ENCODE measurements at regions of chr14 and their contacts with region 1.

Region 1: GRCh38 chr14:81170104-81170828 is 50.5 kb downstream of the GTF2A1 start:
- DNase-seq: peak; percentile 88 to 89
- H3K4me3 ChIP-seq: peak overlapping the region; percentile 64
- H3K4me3 Mint-ChIP-seq: peak overlapping the region; percentile 81
- H3K27ac Mint-ChIP-seq: peak overlapping the region; percentile 86
- H3K4me1 ChIP-seq: no peaks in the 10 kb centered on the region
- H3K4me1 Mint-ChIP-seq: no peaks in the 10 kb centered on the region
- H3K27me3 ChIP-seq: no peaks in the 10 kb centered on the region
- H3K27me3 Mint-ChIP-seq: no peaks in the 10 kb centered on the region
- CTCF ChIP-seq: peak; percentile 76 to 86

Region 2: DNA sequence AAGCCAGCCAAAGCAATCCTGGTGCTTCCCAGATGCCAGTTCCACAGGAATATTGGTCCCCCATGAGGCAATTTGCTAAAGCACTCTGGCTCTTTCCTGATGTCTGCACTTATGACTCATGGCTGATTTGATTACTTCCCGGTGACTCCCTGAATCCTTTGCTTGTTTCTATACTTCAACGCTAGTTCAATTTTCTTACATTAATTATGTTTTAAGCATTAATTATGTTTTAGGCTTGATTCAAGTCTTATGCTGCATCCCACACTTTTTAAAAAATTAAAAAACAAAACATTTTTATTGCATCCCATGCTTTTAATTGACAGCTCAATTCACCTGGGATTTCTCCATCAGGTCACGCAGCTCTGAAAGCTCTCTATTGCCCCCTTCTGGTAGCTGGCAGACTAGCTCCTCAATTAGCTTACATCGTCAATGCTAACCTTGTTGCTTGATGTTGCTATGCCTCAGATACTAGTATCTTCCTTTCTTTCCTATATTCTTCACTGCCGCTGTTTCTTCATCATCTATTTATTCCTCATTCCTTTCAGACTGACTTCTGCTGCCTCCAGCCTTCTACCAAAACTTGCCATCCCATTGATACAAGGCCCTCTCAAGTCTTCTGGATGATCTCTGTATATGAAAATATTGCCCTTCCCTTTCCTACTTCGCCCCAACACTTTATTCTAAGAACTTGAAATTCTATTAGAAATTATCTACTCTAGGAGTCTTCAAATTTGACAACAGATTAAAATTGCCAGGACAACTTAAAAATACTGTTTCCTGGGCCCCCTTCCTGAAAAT is 182.8 kb before region 1 on chr14:
- CTCF ChIA-PET with region 1: interaction called, 10 read pairs
- POLR2A ChIA-PET with region 1: no interaction called
- intact Hi-C with region 1: no loop called
- DNase-seq: peak; percentile 57 to 74
- H3K4me3 ChIP-seq: no peak overlapping the region
- H3K4me3 Mint-ChIP-seq: no peak overlapping the region
- H3K27ac Mint-ChIP-seq: no peak overlapping the region
- H3K4me1 ChIP-seq: no peaks in the 10 kb centered on the region
- H3K4me1 Mint-ChIP-seq: no peaks in the 10 kb centered on the region
- H3K27me3 ChIP-seq: no peaks in the 10 kb centered on the region
- H3K27me3 Mint-ChIP-seq: peaks cover 10% of the 10 kb centered on the region
- CTCF ChIP-seq: peak; percentile 81 to 92

Region 3: DNA sequence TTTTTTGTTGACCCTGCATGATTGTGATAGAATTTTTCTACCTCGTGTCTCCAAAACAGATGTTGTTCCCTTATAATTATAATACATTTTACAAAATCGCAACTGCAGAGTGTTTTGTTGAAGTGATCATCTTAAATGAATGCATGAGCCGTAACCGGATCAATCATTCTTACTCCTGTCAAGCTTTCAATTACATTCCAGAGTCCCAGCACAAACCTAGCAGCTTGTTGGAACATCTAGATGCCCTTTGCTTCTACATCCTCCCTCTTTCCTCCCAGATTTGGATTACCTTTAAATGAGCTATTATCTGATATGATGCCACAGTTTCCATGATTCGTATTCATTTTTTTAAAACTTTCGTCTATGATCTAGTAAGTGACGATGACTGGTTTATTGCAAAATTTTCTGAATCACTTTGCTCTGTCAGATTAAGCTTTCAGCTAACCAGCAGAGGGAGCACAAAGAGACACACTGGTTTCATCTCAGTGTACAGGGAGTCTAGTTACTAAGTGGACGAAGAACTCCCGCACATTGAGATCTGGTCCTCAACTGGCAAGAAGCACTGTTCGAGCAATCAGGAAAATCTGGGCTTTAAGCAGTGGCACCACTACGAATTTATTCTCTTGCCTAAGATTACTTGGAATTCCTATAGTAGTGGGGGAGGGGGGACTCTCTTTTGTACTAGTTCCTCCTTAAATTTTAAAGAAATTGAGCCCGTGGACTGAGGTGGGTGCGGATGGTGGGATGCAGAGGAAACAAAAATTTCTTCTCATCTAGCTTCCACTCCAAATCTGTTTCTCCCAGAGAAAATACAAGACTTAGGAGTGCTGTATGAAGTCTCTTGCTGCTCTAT is 174.0 kb before region 1 on chr14:
- CTCF ChIA-PET with region 1: interaction called, 14 read pairs
- POLR2A ChIA-PET with region 1: interaction called, 3 read pairs
- intact Hi-C with region 1: loop called (anchors 1 kb)
- DNase-seq: peak; percentile 45 to 56
- H3K4me3 ChIP-seq: no peak overlapping the region
- H3K4me3 Mint-ChIP-seq: no peak overlapping the region
- H3K27ac Mint-ChIP-seq: no peak overlapping the region
- H3K4me1 ChIP-seq: no peaks in the 10 kb centered on the region
- H3K4me1 Mint-ChIP-seq: no peaks in the 10 kb centered on the region
- H3K27me3 ChIP-seq: no peaks in the 10 kb centered on the region
- H3K27me3 Mint-ChIP-seq: peaks cover 32% of the 10 kb centered on the region
- CTCF ChIP-seq: peak; percentile 52 to 70

Region 4: GRCh38 chr14:81187832-81188522 is 17.7 kb after region 1 on chr14:
- CTCF ChIA-PET with region 1: no interaction called
- POLR2A ChIA-PET with region 1: no interaction called
- intact Hi-C with region 1: no loop called
- DNase-seq: no peak
- H3K4me3 ChIP-seq: no peak overlapping the region
- H3K4me3 Mint-ChIP-seq: no peak overlapping the region
- H3K27ac Mint-ChIP-seq: no peak overlapping the region
- H3K4me1 ChIP-seq: peaks cover 16% of the 10 kb centered on the region; the same call in 1 of the 2 replicates
- H3K4me1 Mint-ChIP-seq: peaks cover 8% of the 10 kb centered on the region
- H3K27me3 ChIP-seq: no peaks in the 10 kb centered on the region
- H3K27me3 Mint-ChIP-seq: no peaks in the 10 kb centered on the region
- CTCF ChIP-seq: no peak

Region 5: DNA sequence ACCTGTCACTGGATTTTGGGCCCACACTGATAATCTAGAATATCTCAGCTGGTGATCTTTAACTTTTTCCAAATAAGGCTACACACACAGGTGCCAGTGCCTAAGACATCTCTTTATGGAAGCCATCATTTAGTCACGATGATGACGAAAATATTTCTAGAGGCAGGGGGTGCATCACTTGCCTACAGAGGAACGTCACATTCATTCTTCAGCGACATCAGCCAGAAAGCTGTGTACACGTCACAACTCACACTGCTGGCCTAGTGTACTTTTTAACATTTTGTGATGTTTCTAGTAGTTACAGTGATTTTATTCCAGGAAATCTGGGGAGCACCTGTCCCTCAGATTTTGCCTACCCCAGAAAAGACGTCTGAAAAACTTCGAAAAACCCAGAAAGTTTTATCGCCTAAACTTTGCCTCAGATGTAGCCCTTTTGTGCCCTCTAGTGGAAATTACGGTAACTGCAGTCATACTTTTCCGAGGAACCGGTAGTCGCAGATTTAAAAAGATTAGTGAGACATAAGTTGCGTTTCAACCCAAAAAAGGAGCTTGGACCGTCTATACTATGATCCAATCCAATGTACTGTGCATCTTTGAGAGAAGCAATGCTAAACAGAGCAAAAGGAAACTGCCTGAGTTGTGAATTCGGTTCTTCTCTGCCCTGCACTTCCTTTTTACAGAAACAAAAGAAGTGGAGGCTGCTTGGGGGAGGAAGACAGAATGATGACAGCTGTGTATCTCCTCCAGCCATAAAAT is 294.2 kb after region 1 on chr14:
- CTCF ChIA-PET with region 1: no interaction called
- POLR2A ChIA-PET with region 1: no interaction called
- intact Hi-C with region 1: loop called (anchors 2 kb)
- DNase-seq: peak in 1 of 2 experiments; percentile 74
- H3K4me3 ChIP-seq: peak overlapping the region; percentile 19
- H3K4me3 Mint-ChIP-seq: peak overlapping the region; percentile 55
- H3K27ac Mint-ChIP-seq: no peak overlapping the region
- H3K4me1 ChIP-seq: no peaks in the 10 kb centered on the region
- H3K4me1 Mint-ChIP-seq: no peaks in the 10 kb centered on the region
- H3K27me3 ChIP-seq: no peaks in the 10 kb centered on the region
- H3K27me3 Mint-ChIP-seq: no peaks in the 10 kb centered on the region
- CTCF ChIP-seq: peak; percentile 68 to 78